Activated CD4-positive, alpha-beta memory T cell treated with anti-CD3 and anti-CD28 coated beads, Interleukin-2, amount 10 ng/mL, durations not matched to agents 7 days and 5 days (primary cell): ENCODE measurements at regions of chr6 and their contacts with region 1.

Region 1: DNA sequence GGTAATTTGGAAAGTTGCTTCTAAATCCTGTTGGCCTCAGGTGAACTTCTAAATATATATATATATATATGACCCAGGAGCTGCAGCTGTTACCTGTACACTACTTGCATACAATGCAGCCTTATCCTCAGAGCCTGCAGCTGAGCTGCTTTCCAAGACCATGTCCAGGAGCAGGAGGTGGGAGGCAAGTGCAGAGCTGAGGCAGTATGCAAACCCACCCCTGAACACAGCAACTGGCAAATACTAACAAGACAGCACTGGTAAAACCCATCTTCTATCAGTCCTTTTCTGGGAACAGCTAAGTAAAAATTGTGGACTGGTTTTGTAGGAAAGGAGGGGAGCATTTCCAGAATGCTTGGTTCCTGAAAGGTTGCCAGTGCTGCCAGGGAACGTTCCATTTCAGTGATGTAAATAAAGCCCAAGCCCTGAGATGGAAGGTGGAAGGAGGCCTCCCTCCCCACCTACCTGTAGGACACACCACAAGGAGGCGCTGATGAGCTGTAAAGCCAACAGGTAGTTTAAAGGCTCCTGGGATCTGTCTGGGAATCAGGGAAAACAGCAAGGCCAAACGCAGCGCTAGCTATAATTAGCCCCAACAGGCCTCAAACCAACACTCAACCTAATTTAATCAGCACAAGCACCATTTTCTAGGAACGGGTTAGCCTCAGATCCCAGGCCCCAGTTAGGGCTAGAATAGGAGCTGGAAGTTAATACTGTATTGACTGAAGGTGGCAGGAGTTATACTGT is 93.8 kb upstream of the MAP7 start:
- DNase-seq: peak; percentile 82
- H3K4me3 Mint-ChIP-seq: no peak overlapping the region
- H3K27ac Mint-ChIP-seq: no peak overlapping the region
- H3K4me1 Mint-ChIP-seq: peaks cover 8% of the 10 kb centered on the region
- H3K27me3 Mint-ChIP-seq: no peaks in the 10 kb centered on the region

Region 2: GRCh38 chr6:136095986-136096385 is 548.0 kb before region 1 on chr6:
- CTCF ChIA-PET with region 1: no interaction called
- POLR2A ChIA-PET with region 1: no interaction called
- DNase-seq: no peak
- H3K4me3 Mint-ChIP-seq: no peak overlapping the region
- H3K27ac Mint-ChIP-seq: no peak overlapping the region
- H3K4me1 Mint-ChIP-seq: no peaks in the 10 kb centered on the region
- H3K27me3 Mint-ChIP-seq: peaks cover 10% of the 10 kb centered on the region

Region 3: DNA sequence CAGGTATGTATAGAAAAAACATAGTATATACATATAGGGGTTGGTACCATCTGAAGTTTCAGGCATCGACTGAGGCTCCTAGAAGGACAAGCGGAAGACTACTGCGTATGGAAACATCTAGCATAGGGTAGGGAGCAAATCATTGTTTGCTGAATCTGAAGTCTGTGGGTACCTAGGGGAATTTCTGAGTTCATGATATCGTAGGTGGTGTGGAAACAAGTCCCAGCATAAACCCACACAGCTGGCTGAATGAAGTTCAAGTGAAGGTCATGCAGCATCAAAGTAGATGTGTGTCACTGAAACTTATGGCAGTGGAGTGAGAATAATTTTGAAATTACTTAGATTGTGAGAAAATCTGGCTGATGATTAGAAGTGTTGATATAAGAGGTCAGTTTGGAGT is 133.2 kb before region 1 on chr6:
- CTCF ChIA-PET with region 1: no interaction called
- POLR2A ChIA-PET with region 1: no interaction called
- DNase-seq: no peak
- H3K4me3 Mint-ChIP-seq: no peak overlapping the region
- H3K27ac Mint-ChIP-seq: no peak overlapping the region
- H3K4me1 Mint-ChIP-seq: peaks cover 10% of the 10 kb centered on the region
- H3K27me3 Mint-ChIP-seq: peaks cover 2% of the 10 kb centered on the region

Region 4: DNA sequence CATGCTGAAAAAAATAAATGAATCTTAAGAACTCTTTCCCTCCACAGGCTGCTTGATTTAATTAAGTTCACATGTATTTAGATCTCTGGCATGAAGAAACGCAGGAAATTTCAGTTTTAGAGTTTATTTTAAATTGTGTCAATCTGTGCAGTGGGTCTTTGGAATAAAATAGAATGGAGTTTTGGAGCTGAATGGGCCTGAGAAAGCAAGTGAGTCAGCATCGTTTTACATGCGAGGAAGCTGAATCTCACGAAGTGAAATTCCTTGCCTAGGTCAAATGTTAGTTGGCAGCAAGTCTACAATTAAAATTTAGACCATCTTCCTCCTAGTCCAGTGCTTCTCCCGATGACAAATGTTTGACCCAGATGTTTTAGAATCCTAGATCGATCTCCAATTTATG is 116.2 kb before region 1 on chr6:
- CTCF ChIA-PET with region 1: no interaction called
- POLR2A ChIA-PET with region 1: no interaction called
- DNase-seq: no peak
- H3K4me3 Mint-ChIP-seq: no peak overlapping the region
- H3K27ac Mint-ChIP-seq: no peak overlapping the region
- H3K4me1 Mint-ChIP-seq: peaks cover 20% of the 10 kb centered on the region
- H3K27me3 Mint-ChIP-seq: peaks cover 16% of the 10 kb centered on the region

Region 5: GRCh38 chr6:136600818-136601217 is 43.2 kb before region 1 on chr6:
- CTCF ChIA-PET with region 1: interaction called, 14 read pairs
- POLR2A ChIA-PET with region 1: no interaction called
- DNase-seq: no peak
- H3K4me3 Mint-ChIP-seq: no peak overlapping the region
- H3K27ac Mint-ChIP-seq: no peak overlapping the region
- H3K4me1 Mint-ChIP-seq: peaks cover 4% of the 10 kb centered on the region
- H3K27me3 Mint-ChIP-seq: no peaks in the 10 kb centered on the region

Region 6: DNA sequence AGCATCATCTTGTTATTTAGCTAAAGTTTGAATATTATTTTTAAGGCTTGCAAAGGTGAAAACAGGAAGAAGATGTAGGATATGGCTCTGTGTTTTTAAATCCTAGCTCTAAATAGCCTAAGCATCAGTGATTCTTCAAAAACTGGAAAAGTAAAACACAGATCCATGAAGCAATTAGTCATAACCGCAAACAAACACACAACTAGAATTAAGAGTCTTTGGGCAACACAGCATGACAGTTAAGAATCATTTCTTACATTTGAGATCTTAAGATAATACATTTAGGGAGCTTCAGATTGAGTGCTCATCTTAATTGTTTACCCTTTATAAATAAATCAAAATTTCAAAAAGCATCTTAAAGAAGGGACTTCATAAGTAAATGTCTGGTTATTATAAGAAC is 22.0 kb after region 1 on chr6:
- CTCF ChIA-PET with region 1: interaction called, 13 read pairs
- POLR2A ChIA-PET with region 1: no interaction called
- DNase-seq: no peak
- H3K4me3 Mint-ChIP-seq: no peak overlapping the region
- H3K27ac Mint-ChIP-seq: no peak overlapping the region
- H3K4me1 Mint-ChIP-seq: no peaks in the 10 kb centered on the region
- H3K27me3 Mint-ChIP-seq: no peaks in the 10 kb centered on the region

Region 7: DNA sequence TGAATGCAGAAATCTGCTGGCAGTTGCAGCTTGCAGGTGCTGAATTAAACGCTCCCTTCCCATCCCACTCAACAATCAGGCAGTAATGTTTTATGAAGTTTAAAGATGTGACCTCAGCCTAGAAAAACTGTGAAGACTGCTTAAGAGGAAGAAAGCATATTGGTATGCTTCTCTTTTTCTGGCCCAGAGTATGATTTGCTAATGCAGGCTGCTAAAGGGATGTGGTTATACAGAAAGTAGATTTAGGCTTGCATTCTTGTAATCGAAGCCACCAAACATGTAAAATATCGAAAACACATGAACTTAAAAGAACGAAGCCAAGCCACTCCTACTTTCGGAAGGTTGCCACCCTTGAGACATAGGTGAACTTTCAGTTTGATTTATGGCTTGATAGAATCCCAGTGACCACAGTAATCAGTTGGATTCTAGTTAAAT is 107.5 kb after region 1 on chr6:
- CTCF ChIA-PET with region 1: interaction called, 12 read pairs
- POLR2A ChIA-PET with region 1: interaction called, 3 read pairs
- DNase-seq: peak; percentile 55
- H3K4me3 Mint-ChIP-seq: peak overlapping the region; percentile 51
- H3K27ac Mint-ChIP-seq: peak overlapping the region; percentile 91
- H3K4me1 Mint-ChIP-seq: peaks cover 78% of the 10 kb centered on the region
- H3K27me3 Mint-ChIP-seq: no peaks in the 10 kb centered on the region

Region 8: DNA sequence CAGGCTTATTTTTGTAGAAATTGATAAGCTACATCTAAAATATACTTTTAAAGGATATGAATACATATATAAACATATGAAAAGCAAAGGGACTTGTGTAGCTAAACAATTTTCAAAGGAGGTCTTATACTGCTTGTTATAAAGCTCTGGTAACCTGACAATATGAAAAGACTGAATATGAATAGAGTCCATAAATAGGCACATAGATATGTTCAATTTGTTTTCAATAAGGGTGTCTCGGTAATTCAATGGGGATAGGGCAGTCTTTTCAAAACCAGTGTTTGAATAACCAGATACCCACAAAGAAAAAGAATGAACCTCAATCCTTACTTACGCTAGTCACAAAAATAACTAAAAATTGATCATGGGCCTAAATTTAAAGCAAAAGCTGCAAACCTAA is 157.6 kb after region 1 on chr6:
- CTCF ChIA-PET with region 1: interaction called, 61 read pairs
- POLR2A ChIA-PET with region 1: interaction called, 3 read pairs
- DNase-seq: no peak
- H3K4me3 Mint-ChIP-seq: no peak overlapping the region
- H3K27ac Mint-ChIP-seq: no peak overlapping the region
- H3K4me1 Mint-ChIP-seq: no peaks in the 10 kb centered on the region
- H3K27me3 Mint-ChIP-seq: peaks cover 7% of the 10 kb centered on the region